ENCODE measurements at regions of chr9 and their contacts with region 1.

Region 1: DNA sequence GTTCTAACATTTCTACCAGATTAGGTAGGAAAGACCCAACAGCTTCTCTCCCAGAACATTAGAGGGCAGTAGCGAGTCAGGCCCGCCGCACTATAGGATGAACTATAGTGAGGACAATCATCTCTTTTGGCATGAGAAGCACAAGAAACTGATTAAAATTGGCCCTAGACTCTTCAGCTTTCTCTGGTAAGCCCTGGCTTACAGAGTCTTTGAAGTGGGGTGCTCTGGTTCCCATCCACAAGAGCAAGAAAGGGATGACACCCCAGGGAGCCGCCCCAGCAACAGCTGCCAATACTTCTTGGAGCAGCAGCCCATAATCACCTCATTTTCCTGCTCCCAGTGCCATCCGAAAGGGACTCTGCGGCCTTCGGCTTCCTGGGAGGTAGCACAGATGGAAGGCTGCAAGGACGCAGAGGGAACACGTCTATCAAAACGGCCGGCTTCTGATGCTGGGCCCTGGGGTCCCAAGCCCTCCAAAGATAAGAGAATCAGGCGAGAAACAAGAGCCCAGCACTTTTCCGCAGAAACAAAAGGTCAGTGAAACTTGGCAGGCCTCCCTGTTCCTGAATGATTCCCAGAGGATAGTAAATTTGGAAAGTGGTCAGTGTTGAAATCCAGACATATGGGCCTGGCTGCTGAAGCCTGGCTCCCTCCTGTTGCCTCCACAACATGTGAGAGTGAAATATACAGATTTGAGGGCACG is 69.3 kb downstream of the HSD17B3 start:
- DNase-seq: peak; percentile 77
- H3K4me3 ChIP-seq: no peak overlapping the region
- H3K27ac ChIP-seq: no peak overlapping the region
- H3K4me1 ChIP-seq: no peaks in the 10 kb centered on the region
- H3K27me3 ChIP-seq: no peaks in the 10 kb centered on the region
- CTCF ChIP-seq: peak; percentile 92

Region 2: GRCh38 chr9:96317335-96317980 is 84.8 kb after region 1 on chr9:
- CTCF ChIA-PET with region 1: interaction called, 13 read pairs
- POLR2A ChIA-PET with region 1: no interaction called
- intact Hi-C with region 1: loop called (anchors 1 kb)
- DNase-seq: peak; percentile 62
- H3K4me3 ChIP-seq: no peak overlapping the region
- H3K27ac ChIP-seq: no peak overlapping the region
- H3K4me1 ChIP-seq: no peaks in the 10 kb centered on the region
- H3K27me3 ChIP-seq: no peaks in the 10 kb centered on the region
- CTCF ChIP-seq: peak; percentile 87

Region 3: DNA sequence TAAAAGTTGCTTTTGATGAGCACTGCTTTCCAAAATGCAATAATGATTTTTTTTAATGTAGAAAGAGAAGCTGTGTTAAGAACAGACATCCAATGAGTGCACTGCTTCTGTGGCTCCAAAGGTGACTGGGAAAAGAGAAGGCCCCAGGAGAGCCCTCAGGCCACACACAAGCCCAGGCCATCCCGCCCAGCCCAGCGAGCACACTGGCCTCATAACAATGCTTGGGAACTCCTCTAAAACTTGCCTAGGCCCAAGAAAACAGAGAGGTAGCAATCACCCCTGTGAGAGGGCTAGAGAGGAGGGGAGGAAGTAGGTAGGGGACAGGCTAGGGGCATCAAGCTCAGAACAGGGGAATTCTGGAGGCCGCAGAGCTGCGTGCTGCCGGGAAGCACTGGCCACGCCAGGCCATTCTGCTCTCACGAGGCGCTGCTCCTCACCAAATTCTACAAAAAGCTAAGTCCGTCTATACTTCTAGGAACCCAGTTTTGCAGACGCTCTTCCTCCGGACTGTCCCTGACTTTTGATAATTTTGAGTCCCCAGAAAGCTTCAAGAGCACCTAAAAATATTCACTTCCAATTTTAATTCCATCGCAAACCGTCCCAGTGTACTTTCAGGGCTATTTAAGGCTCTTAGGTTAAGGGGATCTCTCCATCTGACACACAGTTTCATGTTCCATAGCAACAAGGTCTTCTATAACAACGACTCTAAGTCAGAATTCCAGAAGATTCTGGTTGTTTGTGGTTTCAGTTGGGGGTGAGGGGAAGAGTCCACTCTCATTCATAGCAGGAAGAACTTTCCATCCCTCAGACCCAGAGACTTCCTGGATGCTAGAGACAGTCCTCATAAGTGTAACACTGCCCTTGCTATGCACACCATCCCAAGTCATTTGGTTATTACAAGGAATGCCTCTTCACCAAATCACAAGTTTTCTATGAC is 268.3 kb after region 1 on chr9:
- CTCF ChIA-PET with region 1: no interaction called
- POLR2A ChIA-PET with region 1: no interaction called
- intact Hi-C with region 1: no loop called
- DNase-seq: no peak
- H3K4me3 ChIP-seq: no peak overlapping the region
- H3K27ac ChIP-seq: no peak overlapping the region
- H3K4me1 ChIP-seq: no peaks in the 10 kb centered on the region
- H3K27me3 ChIP-seq: no peaks in the 10 kb centered on the region
- CTCF ChIP-seq: no peak

Region 4: DNA sequence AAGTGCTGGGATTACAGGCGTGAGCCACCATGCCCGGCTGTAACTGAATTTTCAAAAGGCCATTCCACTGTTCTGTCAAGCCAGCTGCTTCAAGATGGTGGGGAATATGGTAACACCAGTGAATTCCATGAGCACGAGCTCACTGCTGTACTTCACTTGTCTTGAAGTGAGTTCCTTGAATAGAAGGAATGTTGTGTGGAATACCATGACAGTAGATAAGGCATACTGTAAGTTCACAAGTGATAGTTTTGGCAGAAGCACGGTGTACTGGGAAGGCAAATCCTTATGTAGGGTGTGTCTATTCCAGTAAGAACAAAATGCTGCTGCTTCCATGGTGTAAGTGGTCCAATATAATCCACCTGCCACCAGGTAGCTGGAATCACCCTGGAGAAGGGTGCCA is 429.0 kb after region 1 on chr9:
- CTCF ChIA-PET with region 1: interaction called, 4 read pairs
- POLR2A ChIA-PET with region 1: no interaction called
- intact Hi-C with region 1: loop called (anchors 10 kb)
- DNase-seq: no peak
- H3K4me3 ChIP-seq: no peak overlapping the region
- H3K27ac ChIP-seq: no peak overlapping the region
- H3K4me1 ChIP-seq: no peaks in the 10 kb centered on the region
- H3K27me3 ChIP-seq: no peaks in the 10 kb centered on the region
- CTCF ChIP-seq: no peak